ENCODE measurements at regions of chr1 and their contacts with region 1.

Region 1: DNA sequence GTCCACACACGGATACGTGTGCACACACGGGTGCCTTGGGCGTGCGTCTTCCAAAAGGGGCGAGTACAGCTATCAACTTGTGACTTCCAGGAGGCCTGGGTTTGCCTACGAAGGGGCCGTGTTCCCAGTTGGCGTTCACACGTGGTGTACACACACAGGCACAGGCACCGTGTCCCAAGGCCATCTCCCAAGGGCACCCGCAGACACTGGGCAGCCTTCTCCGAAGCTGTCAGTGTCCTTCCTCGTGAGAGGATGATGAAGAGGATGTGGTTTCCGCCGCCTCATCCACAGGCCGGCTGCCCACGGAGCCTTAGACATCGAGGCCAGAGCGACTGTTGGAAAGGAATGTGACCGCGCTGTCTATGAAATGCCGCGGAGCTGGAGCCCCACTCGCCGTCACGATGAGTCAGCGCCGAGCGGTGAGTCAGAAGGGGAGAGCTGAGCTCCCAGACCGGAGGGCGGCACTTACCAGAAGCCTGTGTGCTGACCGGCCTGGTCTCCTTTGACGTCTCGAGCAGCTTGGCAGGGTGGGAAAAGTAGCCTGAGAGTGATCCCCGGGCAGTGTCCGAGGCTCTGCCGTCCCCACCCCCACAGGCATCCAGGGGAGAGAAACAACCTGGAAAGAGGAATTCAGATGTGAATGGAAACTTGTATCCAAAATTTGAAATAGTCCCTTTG is 141.4 kb upstream of the ARHGEF16 start:
- DNase-seq: peak; percentile 98
- H3K4me3 ChIP-seq: peak overlapping the region in 1 of 4 donors; percentile 3
- H3K27ac ChIP-seq: peak overlapping the region; percentile 92 to 97 (median 96)
- H3K4me1 ChIP-seq: peaks cover 0 to 42% (median 36%) of the 10 kb centered on the region in 4 donors
- H3K27me3 ChIP-seq: peaks cover 0 to 3% (median 0%) of the 10 kb centered on the region in 3 donors
- CTCF ChIP-seq: no peak
- EP300 ChIP-seq: peak in 2 of 4 donors; percentile 39 to 95
- POLR2A ChIP-seq: peak in 1 of 2 donors; percentile 21

Region 2: GRCh38 chr1:3170561-3171453 is 142.2 kb before region 1 on chr1:
- intact Hi-C with region 1: loop called (anchors 5 kb)
- DNase-seq: peak; percentile 94
- H3K4me3 ChIP-seq: peak overlapping the region; percentile 27 to 49 (median 38)
- H3K27ac ChIP-seq: peak overlapping the region; percentile 77 to 85 (median 83)
- H3K4me1 ChIP-seq: peaks cover 0 to 46% (median 30%) of the 10 kb centered on the region in 4 donors
- H3K27me3 ChIP-seq: no peaks in the 10 kb centered on the region
- CTCF ChIP-seq: no peak
- EP300 ChIP-seq: peak in 2 of 4 donors; percentile 14 to 17
- POLR2A ChIP-seq: no peak

Region 3: GRCh38 chr1:3352299-3352951 is 39.4 kb after region 1 on chr1:
- intact Hi-C with region 1: loop called (anchors 1 kb)
- DNase-seq: peak; percentile 92
- H3K4me3 ChIP-seq: peak overlapping the region in 3 of 4 donors; percentile 10 to 20 (median 19)
- H3K27ac ChIP-seq: peak overlapping the region; percentile 92 to 95 (median 94)
- H3K4me1 ChIP-seq: peaks cover 0 to 50% (median 43%) of the 10 kb centered on the region in 4 donors
- H3K27me3 ChIP-seq: peaks cover 0 to 6% (median 0%) of the 10 kb centered on the region in 3 donors
- CTCF ChIP-seq: no peak
- EP300 ChIP-seq: peak; percentile 37 to 94 (median 84)
- POLR2A ChIP-seq: peak in 1 of 2 donors; percentile 43